Adrenal gland (tissue), 19 donors: ENCODE measurements at regions of chr7 and their contacts with region 1.

Region 1: DNA sequence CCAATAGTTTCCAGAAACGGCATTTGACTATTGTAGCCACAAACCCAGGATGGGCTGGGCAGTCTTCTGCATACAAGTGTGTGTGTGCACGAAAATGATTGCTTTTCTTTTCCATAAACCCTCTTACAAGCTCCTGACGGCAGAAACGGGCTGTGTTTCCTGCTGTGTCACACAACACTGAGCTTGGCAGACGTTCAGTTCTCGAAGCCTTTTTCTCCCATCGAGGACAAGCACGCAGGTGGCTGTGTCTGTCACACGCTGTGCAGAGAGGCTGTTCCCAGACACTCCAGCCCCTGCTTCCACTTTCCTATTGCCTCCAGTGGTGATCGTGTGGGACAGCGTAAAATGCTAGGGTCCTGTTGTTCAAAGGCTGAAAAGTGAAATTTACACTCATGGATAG is 32.1 kb downstream of the RBAK start:
- DNase-seq: peak in 3 of 7 donors; percentile 13 to 23 (median 15)
- H3K4me3 ChIP-seq: no peak overlapping the region
- H3K27ac ChIP-seq: no peak overlapping the region
- H3K4me1 ChIP-seq: no peaks in the 10 kb centered on the region
- H3K27me3 ChIP-seq: no peaks in the 10 kb centered on the region
- CTCF ChIP-seq: no peak
- POLR2A ChIP-seq: no peak

Region 2: DNA sequence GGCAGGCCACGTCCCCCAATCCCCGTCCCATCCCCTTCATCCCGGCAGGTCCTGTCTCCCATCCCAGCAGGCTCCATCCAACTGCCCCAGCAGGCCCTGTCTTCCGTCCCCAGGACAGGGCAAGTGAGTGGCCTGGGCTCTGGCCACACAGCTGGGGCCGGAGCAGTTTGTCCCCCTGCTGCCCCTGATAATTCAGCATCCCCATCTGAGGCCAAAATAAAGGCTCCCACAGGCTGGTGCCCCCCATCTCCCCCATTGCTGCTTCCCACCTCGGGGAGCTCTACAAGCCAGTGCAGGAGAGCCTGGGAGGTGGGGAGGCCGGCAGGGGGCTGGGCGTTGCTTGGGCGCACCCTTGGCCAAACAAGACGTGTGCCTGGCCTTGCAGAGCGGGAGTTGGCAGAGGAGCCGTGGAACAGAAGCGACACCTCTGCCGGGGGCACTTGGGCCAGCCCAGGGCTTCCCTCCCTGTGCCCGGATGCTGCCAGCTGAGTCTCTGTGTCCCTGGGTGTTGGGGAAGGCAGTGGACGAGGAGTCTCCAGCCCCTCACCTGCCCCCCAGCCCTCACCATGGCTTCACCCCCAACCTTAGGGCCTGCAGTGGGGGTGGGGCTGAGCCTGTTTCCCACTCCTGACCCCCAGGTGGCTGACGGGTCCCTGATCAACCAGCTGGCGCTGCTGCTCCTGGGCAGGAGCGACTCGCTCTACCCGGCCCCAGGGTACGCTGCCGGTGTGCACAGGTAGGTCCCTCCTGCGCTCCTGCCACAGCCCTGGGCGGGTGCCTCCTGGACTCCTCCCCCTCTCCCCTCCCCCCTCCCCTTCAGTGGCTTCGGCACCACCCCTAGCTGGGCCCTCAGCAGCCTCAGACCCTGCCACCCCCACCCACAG is 288.3 kb before region 1 on chr7:
- intact Hi-C with region 1: no loop called
- DNase-seq: peak in 4 of 7 donors; percentile 51 to 66 (median 59)
- H3K4me3 ChIP-seq: no peak overlapping the region
- H3K27ac ChIP-seq: no peak overlapping the region
- H3K4me1 ChIP-seq: peaks cover 13 to 14% of the 10 kb centered on the region in 2 donors
- H3K27me3 ChIP-seq: no peaks in the 10 kb centered on the region
- CTCF ChIP-seq: no peak
- POLR2A ChIP-seq: no peak

Region 3: DNA sequence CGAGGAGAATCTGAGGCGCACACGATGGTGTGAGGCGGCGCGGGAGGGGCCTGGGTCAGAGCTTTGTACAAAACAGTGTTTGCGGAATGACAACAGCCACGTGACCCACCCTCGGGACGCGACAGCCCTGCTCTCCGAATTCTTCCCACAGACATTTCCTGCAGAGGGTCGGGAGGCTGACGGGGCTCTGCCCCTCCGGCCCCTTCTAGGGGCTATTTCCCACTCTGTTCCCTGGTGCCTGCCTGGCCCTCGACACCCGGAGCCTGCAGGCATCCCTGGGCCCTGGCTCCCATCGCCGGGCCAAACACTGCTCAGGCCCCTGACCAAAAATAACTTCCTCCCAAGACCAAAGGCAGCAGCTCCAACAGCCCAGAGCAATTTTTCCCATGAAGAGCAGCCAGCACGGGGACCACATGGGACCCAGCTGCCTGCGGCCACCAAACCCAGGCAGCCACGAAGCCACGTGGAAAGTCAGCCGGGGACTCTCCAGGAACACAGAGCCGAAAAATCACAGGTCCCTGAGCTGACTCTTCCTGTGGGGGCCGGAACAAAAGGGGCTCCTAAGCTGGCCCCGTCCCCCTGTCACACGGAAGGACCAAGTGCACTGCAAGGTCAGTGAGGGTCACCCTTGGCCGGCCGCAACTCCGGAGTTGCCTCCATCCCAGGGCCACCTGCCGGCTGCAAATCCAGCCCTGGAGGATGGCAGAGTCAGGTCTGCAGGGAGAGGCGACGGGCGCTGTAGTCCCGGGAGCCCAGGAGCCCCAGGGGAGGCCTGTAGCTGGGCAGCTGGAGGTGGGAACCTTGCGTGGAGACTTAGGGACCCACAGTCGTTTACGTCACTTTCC is 258.0 kb before region 1 on chr7:
- intact Hi-C with region 1: loop called in 1 of 2 experiments (anchors 5 kb)
- DNase-seq: no peak
- H3K4me3 ChIP-seq: no peak overlapping the region
- H3K27ac ChIP-seq: no peak overlapping the region
- H3K4me1 ChIP-seq: no peaks in the 10 kb centered on the region
- H3K27me3 ChIP-seq: no peaks in the 10 kb centered on the region
- CTCF ChIP-seq: no peak
- POLR2A ChIP-seq: no peak

Region 4: GRCh38 chr7:5375925-5376324 is 298.2 kb after region 1 on chr7:
- intact Hi-C with region 1: no loop called
- DNase-seq: no peak
- H3K4me3 ChIP-seq: no peak overlapping the region
- H3K27ac ChIP-seq: no peak overlapping the region
- H3K4me1 ChIP-seq: no peaks in the 10 kb centered on the region
- H3K27me3 ChIP-seq: no peaks in the 10 kb centered on the region
- CTCF ChIP-seq: no peak
- POLR2A ChIP-seq: no peak